Calu3 (cell line): ENCODE measurements at regions of chr14 and their contacts with region 1.

Region 1: DNA sequence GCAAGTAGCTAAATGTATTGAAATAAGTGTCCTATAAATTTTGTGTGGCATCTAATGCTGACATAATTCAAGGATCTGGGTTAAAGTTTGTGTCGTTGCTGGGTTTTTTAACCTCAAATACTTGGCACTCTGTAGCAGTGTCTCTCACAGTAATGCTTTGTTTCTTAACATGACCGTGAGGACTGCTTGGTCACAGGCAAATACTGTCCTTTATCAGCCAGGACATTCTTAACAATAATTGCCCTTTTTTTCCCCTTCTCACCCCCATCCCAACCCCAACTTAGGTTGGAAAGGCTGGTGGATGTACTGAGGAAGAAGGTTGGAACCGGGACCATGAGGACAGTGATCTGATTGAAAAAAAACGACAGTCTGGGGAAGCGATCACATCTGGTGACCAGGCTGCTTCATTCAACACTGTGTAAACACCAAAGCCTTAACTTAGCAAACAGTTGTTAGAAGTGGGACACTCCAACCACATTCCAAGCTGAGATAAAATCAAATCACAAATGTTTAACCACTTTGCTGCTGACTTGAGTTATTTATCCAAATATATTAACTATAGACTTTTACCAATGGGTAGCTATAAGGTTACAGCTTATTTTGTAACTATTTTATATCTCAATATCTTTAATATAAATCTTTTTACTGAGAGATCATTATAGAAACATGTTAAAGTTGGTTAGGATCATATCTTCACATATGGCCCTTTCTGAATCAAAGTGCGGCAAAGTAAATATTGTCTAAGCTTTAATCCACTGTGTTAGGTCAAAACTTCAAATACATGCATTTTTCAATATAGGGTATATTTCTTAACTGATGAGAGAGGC is 48.2 kb downstream of the FOXA1 start:
- DNase-seq: peak; percentile 30
- H3K4me3 Mint-ChIP-seq: peak overlapping the region; percentile 61
- H3K27ac Mint-ChIP-seq: peak overlapping the region; percentile 85
- H3K4me1 Mint-ChIP-seq: peaks cover 26% of the 10 kb centered on the region
- H3K27me3 Mint-ChIP-seq: no peaks in the 10 kb centered on the region
- CTCF ChIP-seq: no peak

Region 2: GRCh38 chr14:37246427-37246914 is 300.4 kb before region 1 on chr14:
- CTCF ChIA-PET with region 1: no interaction called
- intact Hi-C with region 1: loop called (anchors 5 kb)
- DNase-seq: no peak
- H3K4me3 Mint-ChIP-seq: no peak overlapping the region
- H3K27ac Mint-ChIP-seq: no peak overlapping the region
- H3K4me1 Mint-ChIP-seq: no peaks in the 10 kb centered on the region
- H3K27me3 Mint-ChIP-seq: no peaks in the 10 kb centered on the region
- CTCF ChIP-seq: peak; percentile 60

Region 3: DNA sequence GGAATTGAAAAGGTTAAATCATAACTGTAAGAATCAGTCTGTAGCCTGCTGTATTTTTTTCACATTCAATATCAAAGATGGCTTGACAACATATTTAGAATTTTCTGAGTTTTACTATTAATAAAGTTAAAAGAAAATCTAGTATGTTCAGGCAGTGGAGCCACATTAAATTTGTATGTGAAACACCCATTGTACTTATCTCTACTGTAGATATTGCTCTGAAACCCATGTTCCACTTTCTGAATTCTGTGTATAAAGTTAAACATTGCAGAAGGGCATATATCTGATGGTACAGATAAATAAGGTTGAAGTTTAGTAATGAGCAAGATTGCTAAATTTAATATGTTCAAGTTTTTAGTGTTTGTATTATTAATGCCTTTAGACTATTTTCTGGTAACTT is 124.5 kb before region 1 on chr14:
- CTCF ChIA-PET with region 1: no interaction called
- intact Hi-C with region 1: loop called (anchors 2 kb)
- DNase-seq: no peak
- H3K4me3 Mint-ChIP-seq: no peak overlapping the region
- H3K27ac Mint-ChIP-seq: peak overlapping the region; percentile 23
- H3K4me1 Mint-ChIP-seq: peaks cover 15% of the 10 kb centered on the region
- H3K27me3 Mint-ChIP-seq: no peaks in the 10 kb centered on the region
- CTCF ChIP-seq: no peak

Region 4: GRCh38 chr14:37447883-37448391 is 98.9 kb before region 1 on chr14:
- CTCF ChIA-PET with region 1: no interaction called
- intact Hi-C with region 1: loop called (anchors 5 kb)
- DNase-seq: no peak
- H3K4me3 Mint-ChIP-seq: no peak overlapping the region
- H3K27ac Mint-ChIP-seq: peak overlapping the region; percentile 89
- H3K4me1 Mint-ChIP-seq: peaks cover 15% of the 10 kb centered on the region
- H3K27me3 Mint-ChIP-seq: no peaks in the 10 kb centered on the region
- CTCF ChIP-seq: no peak

Region 5: GRCh38 chr14:37466623-37467088 is 80.2 kb before region 1 on chr14:
- CTCF ChIA-PET with region 1: no interaction called
- intact Hi-C with region 1: loop called (anchors 1 kb)
- DNase-seq: peak; percentile 29
- H3K4me3 Mint-ChIP-seq: no peak overlapping the region
- H3K27ac Mint-ChIP-seq: peak overlapping the region; percentile 45
- H3K4me1 Mint-ChIP-seq: peaks cover 10% of the 10 kb centered on the region
- H3K27me3 Mint-ChIP-seq: no peaks in the 10 kb centered on the region
- CTCF ChIP-seq: no peak

Region 6: DNA sequence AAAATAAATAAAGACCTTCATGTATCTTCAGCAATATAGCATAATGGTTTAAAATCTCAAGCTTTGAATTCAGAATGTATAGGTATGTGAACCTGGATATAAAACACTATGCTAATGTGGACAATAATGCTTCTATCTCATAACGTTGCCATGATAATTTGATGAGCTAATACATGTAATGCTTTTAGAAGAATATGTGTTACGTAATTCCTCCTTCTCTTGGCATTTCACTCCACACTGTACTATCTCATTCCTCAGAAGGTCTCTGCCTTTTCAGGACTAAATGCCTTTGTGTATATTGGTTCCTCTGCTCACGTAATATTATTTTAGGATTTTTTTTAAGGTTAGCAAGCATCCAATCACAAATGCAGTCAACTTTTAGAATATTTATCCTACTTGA is 38.3 kb before region 1 on chr14:
- CTCF ChIA-PET with region 1: no interaction called
- intact Hi-C with region 1: no loop called
- DNase-seq: no peak
- H3K4me3 Mint-ChIP-seq: no peak overlapping the region
- H3K27ac Mint-ChIP-seq: no peak overlapping the region
- H3K4me1 Mint-ChIP-seq: no peaks in the 10 kb centered on the region
- H3K27me3 Mint-ChIP-seq: no peaks in the 10 kb centered on the region
- CTCF ChIP-seq: no peak

Region 7: GRCh38 chr14:37583359-37584231 is 36.8 kb after region 1 on chr14:
- CTCF ChIA-PET with region 1: no interaction called
- intact Hi-C with region 1: loop called (anchors 5 kb)
- DNase-seq: peak; percentile 79
- H3K4me3 Mint-ChIP-seq: peak overlapping the region; percentile 86
- H3K27ac Mint-ChIP-seq: peak overlapping the region; percentile 85
- H3K4me1 Mint-ChIP-seq: peaks cover 35% of the 10 kb centered on the region
- H3K27me3 Mint-ChIP-seq: no peaks in the 10 kb centered on the region
- CTCF ChIP-seq: no peak